Heart left ventricle (tissue), 16 donors: ENCODE measurements at regions of chr6 and their contacts with region 1.

Region 1: DNA sequence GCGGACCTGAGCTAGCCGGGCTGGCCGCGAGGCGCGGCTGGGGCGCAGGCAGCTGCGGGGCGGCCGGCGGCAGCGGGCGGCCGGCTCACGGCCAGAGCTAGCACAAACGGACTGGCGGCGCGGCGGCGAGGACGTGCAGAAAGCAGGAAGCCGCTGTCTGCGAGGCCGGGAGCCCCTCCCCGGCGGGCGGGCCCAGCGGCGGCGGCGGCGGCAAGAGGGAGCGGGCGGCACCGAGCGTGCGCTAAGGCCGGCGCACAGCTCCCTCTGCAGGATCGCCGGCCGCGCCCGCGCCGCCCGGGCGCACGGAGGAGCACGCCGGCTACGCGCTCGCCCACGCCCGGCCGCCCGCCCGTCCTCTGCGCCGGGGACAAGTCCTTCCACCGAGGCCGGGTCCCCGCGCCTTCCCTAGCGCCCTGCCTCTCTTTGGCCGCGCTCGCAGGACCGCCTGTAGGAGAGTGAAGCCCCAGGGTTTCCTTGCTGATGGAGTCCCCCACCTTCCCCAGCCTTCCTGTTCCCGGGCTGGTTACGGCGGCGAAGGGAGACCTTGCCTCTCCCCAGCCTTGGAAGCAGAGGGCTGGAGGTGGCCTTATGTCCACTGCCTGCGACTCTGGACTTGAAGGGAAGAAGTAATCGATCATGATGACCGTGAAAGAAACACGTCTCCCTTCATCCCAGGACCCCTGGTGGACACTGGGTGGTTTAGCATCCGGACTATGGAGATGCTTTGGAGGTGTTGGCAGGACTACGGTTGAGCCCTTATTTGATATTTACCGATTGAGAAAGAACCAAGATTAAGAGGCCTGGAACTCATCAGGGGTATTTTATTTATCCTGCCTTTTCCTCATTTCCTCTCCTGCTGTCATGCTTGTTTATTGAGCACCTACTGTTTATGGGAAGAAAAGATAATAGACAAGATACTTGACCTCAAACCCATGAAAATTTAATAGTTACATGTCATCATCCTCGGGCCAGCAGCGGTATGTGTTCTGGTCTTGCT is at the start of gene PREP:
- DNase-seq: peak; percentile 86 to 93 (median 91)
- ATAC-seq: peak; percentile 76 to 98 (median 96)
- H3K4me3 ChIP-seq: peak within 1 kb of the TSS; percentile 70 to 100 (median 94)
- H3K27ac ChIP-seq: peak within 1 kb of the TSS; percentile 51 to 91 (median 86)
- H3K4me1 ChIP-seq: peaks cover 0 to 44% (median 24%) of the 10 kb centered on the region in 12 donors
- H3K27me3 ChIP-seq: no peaks in the 10 kb centered on the region
- CTCF ChIP-seq: peak; percentile 54 to 77 (median 68)
- POLR2A ChIP-seq: peak in 1 of 2 donors; percentile 74
- total RNA-seq, gene PREP: 15.8 to 35.9 (median 29.6) TPM

Region 2: DNA sequence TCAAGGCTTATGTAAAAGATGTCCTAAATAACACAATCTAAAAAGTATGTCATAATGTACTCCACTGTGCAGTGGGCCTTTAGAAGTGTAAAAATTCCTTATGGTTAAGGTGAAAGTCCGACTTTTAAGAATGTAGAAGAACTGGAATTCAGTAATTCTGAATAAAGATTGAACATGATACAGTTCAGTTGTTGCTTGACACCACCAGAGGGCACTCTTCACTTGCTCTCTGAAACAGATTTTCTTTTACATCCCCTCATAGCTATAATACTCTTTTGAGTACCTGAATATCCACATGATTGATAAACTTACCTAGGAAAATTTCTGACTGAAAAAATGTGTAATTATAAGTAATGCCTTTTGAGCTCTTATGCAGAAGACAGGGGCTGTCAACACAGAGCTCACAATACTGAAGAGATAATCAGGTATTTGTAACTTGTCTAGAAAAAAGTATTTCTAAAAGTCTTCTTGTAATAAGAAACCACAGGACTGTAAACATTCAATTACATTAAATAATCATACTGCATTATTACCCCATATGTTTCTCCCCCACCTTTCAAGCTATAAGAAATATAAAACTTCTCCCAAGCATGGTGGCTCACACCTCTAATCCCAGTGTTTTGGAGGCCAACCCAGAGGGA is 315.5 kb before region 1 on chr6:
- intact Hi-C with region 1: loop called (anchors 1 to 5 kb)
- DNase-seq: no peak
- ATAC-seq: peak in 2 of 4 donors; percentile 57 to 59
- H3K4me3 ChIP-seq: no peak overlapping the region
- H3K27ac ChIP-seq: no peak overlapping the region
- H3K4me1 ChIP-seq: no peaks in the 10 kb centered on the region
- H3K27me3 ChIP-seq: no peaks in the 10 kb centered on the region
- CTCF ChIP-seq: peak; percentile 68 to 91 (median 81)
- POLR2A ChIP-seq: no peak

Region 3: GRCh38 chr6:105094133-105094640 is 309.1 kb before region 1 on chr6:
- intact Hi-C with region 1: loop called in 9 of 10 experiments (anchors 5 kb)
- DNase-seq: no peak
- ATAC-seq: no peak
- H3K4me3 ChIP-seq: no peak overlapping the region
- H3K27ac ChIP-seq: no peak overlapping the region
- H3K4me1 ChIP-seq: no peaks in the 10 kb centered on the region
- H3K27me3 ChIP-seq: no peaks in the 10 kb centered on the region
- CTCF ChIP-seq: no peak
- POLR2A ChIP-seq: no peak

Region 4: DNA sequence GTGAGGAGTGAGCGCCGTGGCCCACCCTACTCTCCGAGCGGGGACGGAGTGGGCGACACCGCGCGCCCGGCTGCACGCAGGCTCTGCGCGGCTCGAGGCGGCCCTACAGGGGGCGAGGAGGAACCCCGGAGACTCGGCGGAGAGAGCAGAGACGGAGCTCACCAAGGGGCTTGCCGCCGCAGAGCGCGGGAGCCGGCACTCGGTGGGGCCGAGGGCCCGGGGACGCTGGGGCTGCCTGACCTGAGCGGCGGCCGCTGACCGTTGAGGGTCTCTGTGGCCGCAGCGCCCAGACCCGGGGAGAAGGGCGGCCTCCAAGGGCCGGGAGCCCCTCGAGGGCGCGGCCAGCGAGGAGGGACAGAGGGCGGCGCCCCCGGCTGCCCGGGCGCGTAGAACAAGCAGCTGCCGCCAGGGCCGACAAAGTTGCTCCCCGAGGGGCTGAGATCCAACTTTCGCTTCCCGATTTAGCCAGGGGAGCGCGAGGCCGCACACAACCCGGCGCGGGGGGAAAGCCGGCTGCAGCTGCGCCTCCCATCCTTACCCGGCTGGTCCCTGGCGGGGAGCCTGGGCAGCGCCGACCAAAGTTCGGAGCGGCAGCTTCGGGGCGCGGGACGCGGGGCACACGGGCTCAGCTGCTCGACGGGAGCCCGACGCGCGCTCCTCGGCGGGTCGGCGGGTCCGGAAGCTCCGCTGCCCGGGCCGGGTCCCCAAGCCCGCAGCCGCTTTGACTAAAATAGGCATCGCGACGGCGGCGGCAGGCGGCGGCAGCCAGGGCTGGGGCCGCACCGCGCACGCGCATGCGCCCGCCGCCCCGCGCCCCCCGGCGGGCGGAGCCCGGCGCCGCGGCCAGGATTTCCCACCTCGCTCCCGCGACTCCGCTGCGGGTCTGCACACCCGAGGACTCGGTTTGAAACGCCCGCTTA is 266.5 kb before region 1 on chr6:
- intact Hi-C with region 1: loop called in 2 of 10 experiments (anchors 2 to 5 kb)
- DNase-seq: peak; percentile 75 to 88 (median 79)
- ATAC-seq: peak; percentile 52 to 85 (median 82)
- H3K4me3 ChIP-seq: peak overlapping the region; percentile 58 to 93 (median 87)
- H3K27ac ChIP-seq: peak overlapping the region; percentile 62 to 95 (median 91)
- H3K4me1 ChIP-seq: peaks cover 0 to 15% (median 7%) of the 10 kb centered on the region in 12 donors
- H3K27me3 ChIP-seq: peaks cover 0 to 33% (median 0%) of the 10 kb centered on the region in 9 donors
- CTCF ChIP-seq: peak in 8 of 12 donors; percentile 6 to 35 (median 20)
- POLR2A ChIP-seq: peak in 1 of 2 donors; percentile 68

Region 5: GRCh38 chr6:105317607-105318533 is 85.4 kb before region 1 on chr6:
- intact Hi-C with region 1: loop called in 2 of 10 experiments (anchors 5 kb)
- DNase-seq: no peak
- ATAC-seq: no peak
- H3K4me3 ChIP-seq: no peak overlapping the region
- H3K27ac ChIP-seq: no peak overlapping the region
- H3K4me1 ChIP-seq: peaks cover 0 to 11% (median 0%) of the 10 kb centered on the region in 12 donors
- H3K27me3 ChIP-seq: no peaks in the 10 kb centered on the region
- CTCF ChIP-seq: peak in 8 of 12 donors; percentile 11 to 38 (median 30)
- POLR2A ChIP-seq: no peak